ENCODE measurements at regions of chr16 and their contacts with region 1.

Region 1: DNA sequence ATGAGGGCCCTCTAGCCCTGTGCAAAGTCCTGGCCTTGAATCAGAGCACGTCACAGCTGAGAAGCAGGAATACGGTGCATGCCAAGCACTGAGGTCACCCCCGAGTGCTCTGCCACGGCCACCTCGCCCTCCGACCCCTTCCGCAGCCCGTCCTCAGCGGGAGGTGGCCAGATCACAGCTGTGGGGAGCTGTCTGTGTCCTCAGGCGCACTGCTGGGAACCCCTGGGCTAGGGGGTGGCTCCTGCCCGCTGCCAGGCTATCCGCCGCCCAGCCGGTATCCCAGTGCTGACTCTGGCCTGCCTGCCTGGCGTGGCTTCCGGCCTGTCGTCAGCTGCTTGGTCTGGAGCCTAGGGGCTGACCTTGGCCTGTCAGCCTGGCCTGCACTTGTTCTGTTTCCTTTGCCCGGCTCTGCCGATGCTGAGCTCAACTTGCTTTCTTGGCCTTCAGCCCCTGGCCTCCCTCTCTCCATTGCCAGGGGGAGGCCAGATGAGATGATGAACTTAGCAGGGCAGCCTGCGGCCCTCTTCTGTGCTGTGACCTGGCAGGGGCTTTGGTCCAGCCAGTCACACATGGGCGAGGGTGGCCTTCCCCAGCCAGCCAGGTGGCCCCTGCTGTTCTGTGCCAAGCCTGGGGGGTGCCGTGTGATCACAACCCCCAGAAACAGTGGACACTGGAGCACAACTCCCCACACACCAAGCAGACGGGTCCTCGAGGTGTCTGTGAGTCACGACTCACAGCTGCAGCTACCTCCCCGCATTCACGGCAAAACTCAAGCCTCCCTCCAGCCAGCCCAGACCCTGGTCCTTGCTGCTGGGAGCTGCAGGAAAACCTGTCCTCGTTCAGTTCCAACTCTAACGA is 77.3 kb downstream of the ZDHHC7 start:
- DNase-seq: no peak
- H3K4me3 ChIP-seq: no peak overlapping the region
- H3K27ac ChIP-seq: peak overlapping the region; percentile 25 to 50
- H3K4me1 ChIP-seq: no peaks in the 10 kb centered on the region
- H3K27me3 ChIP-seq: no peaks in the 10 kb centered on the region
- CTCF ChIP-seq: no peak
- POLR2A ChIP-seq: no peak

Region 2: GRCh38 chr16:84498859-84499620 is 435.0 kb before region 1 on chr16:
- intact Hi-C with region 1: loop called (anchors 10 kb)
- DNase-seq: no peak
- H3K4me3 ChIP-seq: no peak overlapping the region
- H3K27ac ChIP-seq: no peak overlapping the region
- H3K4me1 ChIP-seq: peaks cover 0 to 6% of the 10 kb centered on the region in 2 donors
- H3K27me3 ChIP-seq: no peaks in the 10 kb centered on the region
- CTCF ChIP-seq: no peak
- POLR2A ChIP-seq: no peak

Measured in breast epithelium (tissue), 4 donors.